CD14-positive monocyte (primary cell): ENCODE measurements at regions of chrX and their contacts with region 1.

Region 1: GRCh38 chrX:124086411-124086810 is 124.9 kb downstream of the STAG2 start:
- DNase-seq: no peak
- H3K4me3 ChIP-seq: no peak overlapping the region
- H3K4me3 Mint-ChIP-seq: no peak overlapping the region
- H3K27ac ChIP-seq: no peak overlapping the region
- H3K27ac Mint-ChIP-seq: peak overlapping the region in 1 of 7 donors; percentile 25
- H3K4me1 ChIP-seq: no peaks in the 10 kb centered on the region
- H3K4me1 Mint-ChIP-seq: no peaks in the 10 kb centered on the region
- H3K27me3 ChIP-seq: no peaks in the 10 kb centered on the region
- H3K27me3 Mint-ChIP-seq: no peaks in the 10 kb centered on the region
- CTCF ChIP-seq: no peak

Region 2: DNA sequence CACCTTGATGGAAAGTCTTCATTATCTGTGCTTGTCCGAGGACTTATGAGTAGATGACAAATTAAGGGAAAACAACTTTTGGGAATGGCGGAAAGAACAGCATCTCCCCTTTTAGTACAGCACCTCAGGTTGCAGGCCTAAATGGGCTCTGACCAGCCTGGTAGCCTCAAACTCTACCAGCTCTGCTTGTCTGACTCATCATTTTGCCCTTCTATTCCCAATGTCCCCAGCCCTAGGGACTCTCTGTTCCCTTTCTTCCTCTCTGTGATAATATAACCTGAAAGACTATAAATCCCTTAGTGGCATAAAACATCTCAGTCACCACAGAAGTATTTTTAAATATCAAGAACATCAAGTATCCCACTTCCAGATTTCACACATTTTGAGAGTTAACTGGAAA is 475.5 kb before region 1 on chrX:
- intact Hi-C with region 1: loop called in 1 of 2 experiments (anchors 10 kb)
- DNase-seq: no peak
- H3K4me3 ChIP-seq: no peak overlapping the region
- H3K4me3 Mint-ChIP-seq: no peak overlapping the region
- H3K27ac ChIP-seq: no peak overlapping the region
- H3K27ac Mint-ChIP-seq: no peak overlapping the region
- H3K4me1 ChIP-seq: no peaks in the 10 kb centered on the region
- H3K4me1 Mint-ChIP-seq: no peaks in the 10 kb centered on the region
- H3K27me3 ChIP-seq: no peaks in the 10 kb centered on the region
- H3K27me3 Mint-ChIP-seq: no peaks in the 10 kb centered on the region
- CTCF ChIP-seq: no peak